ENCODE measurements at regions of chr1 and their contacts with region 1.

Region 1: DNA sequence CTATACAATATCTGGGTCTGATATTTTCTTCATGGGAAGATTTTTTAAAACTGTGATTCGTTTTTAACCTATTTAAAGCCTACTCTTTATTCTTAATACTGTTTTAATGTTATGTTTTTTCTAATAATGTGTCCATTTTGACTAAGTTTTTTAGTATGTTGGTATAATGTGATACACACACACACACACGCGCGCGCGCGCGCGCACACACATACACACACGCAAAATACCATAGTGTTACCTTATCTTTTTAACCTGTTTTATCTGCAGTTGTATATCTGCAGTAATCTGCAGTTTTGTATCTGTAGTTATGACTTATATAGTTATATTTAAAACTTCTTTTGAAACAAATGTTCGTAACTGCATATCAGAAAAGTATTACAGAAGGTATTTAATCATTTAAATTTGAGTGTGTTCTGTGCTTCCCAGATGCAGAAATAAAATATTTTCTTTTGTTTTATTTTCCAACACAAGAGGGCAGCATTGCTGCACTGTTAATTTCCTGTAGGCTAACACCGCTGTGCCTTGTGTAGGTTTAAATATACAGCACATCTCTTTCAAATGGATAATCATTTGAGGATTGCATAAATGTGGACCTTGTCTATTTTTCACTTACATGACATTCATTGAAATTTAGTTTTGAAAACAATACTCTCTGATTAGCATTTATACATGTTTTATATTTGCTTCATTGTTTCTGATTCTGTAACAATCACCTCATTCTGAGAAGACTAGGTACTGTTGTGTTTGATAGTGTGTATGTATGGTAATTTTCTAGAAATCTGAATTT is 166.1 kb downstream of the PDE4B start:
- DNase-seq: no peak
- H3K4me3 ChIP-seq: no peak overlapping the region
- H3K27ac ChIP-seq: no peak overlapping the region
- H3K4me1 ChIP-seq: no peaks in the 10 kb centered on the region
- H3K27me3 ChIP-seq: no peaks in the 10 kb centered on the region
- CTCF ChIP-seq: peak; percentile 45 to 78 (median 51)

Region 2: GRCh38 chr1:65979136-65980044 is 20.6 kb after region 1 on chr1:
- intact Hi-C with region 1: no loop called
- DNase-seq: no peak
- H3K4me3 ChIP-seq: no peak overlapping the region
- H3K27ac ChIP-seq: no peak overlapping the region
- H3K4me1 ChIP-seq: no peaks in the 10 kb centered on the region
- H3K27me3 ChIP-seq: no peaks in the 10 kb centered on the region
- CTCF ChIP-seq: no peak

Region 3: GRCh38 chr1:66000033-66000637 is 41.4 kb after region 1 on chr1:
- intact Hi-C with region 1: no loop called
- DNase-seq: no peak
- H3K4me3 ChIP-seq: no peak overlapping the region
- H3K27ac ChIP-seq: no peak overlapping the region
- H3K4me1 ChIP-seq: no peaks in the 10 kb centered on the region
- H3K27me3 ChIP-seq: no peaks in the 10 kb centered on the region
- CTCF ChIP-seq: no peak

Region 4: GRCh38 chr1:66012106-66012784 is 53.5 kb after region 1 on chr1:
- intact Hi-C with region 1: no loop called
- DNase-seq: no peak
- H3K4me3 ChIP-seq: no peak overlapping the region
- H3K27ac ChIP-seq: no peak overlapping the region
- H3K4me1 ChIP-seq: no peaks in the 10 kb centered on the region
- H3K27me3 ChIP-seq: no peaks in the 10 kb centered on the region
- CTCF ChIP-seq: no peak

Region 5: GRCh38 chr1:66242646-66243547 is 284.1 kb after region 1 on chr1:
- intact Hi-C with region 1: loop called (anchors 1 kb)
- DNase-seq: peak; percentile 43 to 92
- H3K4me3 ChIP-seq: no peak overlapping the region
- H3K27ac ChIP-seq: no peak overlapping the region
- H3K4me1 ChIP-seq: no peaks in the 10 kb centered on the region
- H3K27me3 ChIP-seq: no peaks in the 10 kb centered on the region
- CTCF ChIP-seq: peak; percentile 93 to 98 (median 96)

Region 6: GRCh38 chr1:66732407-66733166 is 773.8 kb after region 1 on chr1:
- intact Hi-C with region 1: loop called (anchors 10 kb)
- DNase-seq: no peak
- H3K4me3 ChIP-seq: no peak overlapping the region
- H3K27ac ChIP-seq: no peak overlapping the region
- H3K4me1 ChIP-seq: no peaks in the 10 kb centered on the region
- H3K27me3 ChIP-seq: no peaks in the 10 kb centered on the region
- CTCF ChIP-seq: no peak

Measured in ascending aorta (tissue), 2 donors.